Colonic mucosa (tissue), 4 donors: ENCODE measurements at regions of chr3 and their contacts with region 1.

Region 1: GRCh38 chr3:193788189-193788991 is 195.4 kb downstream of the OPA1 start:
- DNase-seq: peak; percentile 76
- H3K4me3 ChIP-seq: no peak overlapping the region
- H3K27ac ChIP-seq: no peak overlapping the region
- H3K4me1 ChIP-seq: no peaks in the 10 kb centered on the region
- H3K27me3 ChIP-seq: no peaks in the 10 kb centered on the region
- CTCF ChIP-seq: peak; percentile 73

Region 2: GRCh38 chr3:193960487-193961274 is 172.3 kb after region 1 on chr3:
- intact Hi-C with region 1: loop called (anchors 10 kb)
- DNase-seq: peak; percentile 82
- H3K4me3 ChIP-seq: no peak overlapping the region
- H3K27ac ChIP-seq: no peak overlapping the region
- H3K4me1 ChIP-seq: no peaks in the 10 kb centered on the region
- H3K27me3 ChIP-seq: no peaks in the 10 kb centered on the region
- CTCF ChIP-seq: no peak

Region 3: GRCh38 chr3:193997228-193998122 is 209.1 kb after region 1 on chr3:
- intact Hi-C with region 1: loop called (anchors 10 kb)
- DNase-seq: peak; percentile 33
- H3K4me3 ChIP-seq: no peak overlapping the region
- H3K27ac ChIP-seq: no peak overlapping the region
- H3K4me1 ChIP-seq: no peaks in the 10 kb centered on the region
- H3K27me3 ChIP-seq: no peaks in the 10 kb centered on the region
- CTCF ChIP-seq: no peak